Panc1 (cell line): ENCODE measurements at regions of chr5 and their contacts with region 1.

Region 1: GRCh38 chr5:58300361-58300895 is 159.5 kb downstream of the PLK2 start:
- DNase-seq: no peak
- ATAC-seq: no peak
- H3K4me3 ChIP-seq: no peak overlapping the region
- H3K27ac ChIP-seq: no peak overlapping the region
- H3K4me1 ChIP-seq: no peaks in the 10 kb centered on the region
- H3K27me3 ChIP-seq: no peaks in the 10 kb centered on the region
- CTCF ChIP-seq: no peak

Region 2: DNA sequence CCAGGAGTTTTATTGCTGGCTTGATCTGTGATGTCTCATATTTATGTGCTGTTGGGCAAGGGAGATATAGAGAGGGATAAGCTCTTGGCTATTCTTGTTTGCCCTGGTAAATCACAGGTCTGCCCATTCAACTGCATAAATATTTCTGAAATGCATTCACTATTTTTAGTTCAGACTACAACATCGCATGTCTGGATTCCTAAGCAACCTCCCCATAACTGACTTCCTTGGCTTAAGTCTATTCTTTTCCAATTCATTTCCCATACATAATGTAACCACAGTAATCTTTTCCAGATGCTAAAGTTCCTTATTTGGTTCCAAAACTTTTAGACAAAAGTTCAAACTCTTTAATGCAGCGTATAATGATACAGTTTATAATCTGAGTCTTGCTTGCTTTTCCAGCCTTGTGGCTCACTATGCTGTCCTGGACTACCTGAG is 496.4 kb before region 1 on chr5:
- CTCF ChIA-PET with region 1: no interaction called
- POLR2A ChIA-PET with region 1: no interaction called
- in situ Hi-C with region 1: no loop called
- intact Hi-C with region 1: no loop called
- DNase-seq: no peak
- ATAC-seq: no peak
- H3K4me3 ChIP-seq: no peak overlapping the region
- H3K27ac ChIP-seq: peak overlapping the region; percentile 76; the same call in 1 of the 2 replicates
- H3K4me1 ChIP-seq: no peaks in the 10 kb centered on the region
- H3K27me3 ChIP-seq: no peaks in the 10 kb centered on the region
- CTCF ChIP-seq: no peak

Region 3: DNA sequence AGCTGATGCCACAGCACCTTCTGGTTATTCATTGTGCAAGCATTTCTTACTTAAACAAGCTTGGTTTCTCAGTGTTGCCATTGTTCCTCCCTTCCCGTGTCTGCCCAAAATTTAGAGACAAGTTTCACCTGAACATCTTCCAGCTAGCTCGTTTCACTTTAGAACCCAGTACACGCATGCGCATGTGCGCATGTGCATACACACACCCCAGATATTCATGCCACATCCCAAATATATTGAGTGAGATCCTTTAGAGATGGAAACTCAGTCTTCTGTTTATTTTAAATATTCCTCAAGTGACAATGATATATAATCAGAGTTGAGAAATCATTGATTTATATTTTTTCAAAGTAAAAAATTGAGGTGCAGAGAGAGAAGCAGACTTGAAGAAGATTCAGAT is 11.9 kb after region 1 on chr5:
- CTCF ChIA-PET with region 1: interaction called, 10 read pairs
- POLR2A ChIA-PET with region 1: no interaction called
- in situ Hi-C with region 1: no loop called
- intact Hi-C with region 1: no loop called
- DNase-seq: no peak
- ATAC-seq: no peak
- H3K4me3 ChIP-seq: no peak overlapping the region
- H3K27ac ChIP-seq: no peak overlapping the region
- H3K4me1 ChIP-seq: no peaks in the 10 kb centered on the region
- H3K27me3 ChIP-seq: no peaks in the 10 kb centered on the region
- CTCF ChIP-seq: no peak